Activated CD4-positive, alpha-beta memory T cell treated with anti-CD3 and anti-CD28 coated beads for 36 hours (primary cell): ENCODE measurements at regions of chr10 and their contacts with region 1.

Region 1: GRCh38 chr10:3776796-3777571 is 8.0 kb downstream of the KLF6 start:
- DNase-seq: peak; percentile 70
- H3K4me3 Mint-ChIP-seq: peak overlapping the region; percentile 67
- H3K27ac Mint-ChIP-seq: peak overlapping the region; percentile 83
- H3K4me1 Mint-ChIP-seq: peaks cover 77% of the 10 kb centered on the region
- H3K27me3 Mint-ChIP-seq: no peaks in the 10 kb centered on the region

Region 2: GRCh38 chr10:3605882-3606281 is 171.1 kb before region 1 on chr10:
- CTCF ChIA-PET with region 1: no interaction called
- POLR2A ChIA-PET with region 1: no interaction called
- intact Hi-C with region 1: loop called (anchors 5 kb)
- DNase-seq: peak; percentile 20
- H3K4me3 Mint-ChIP-seq: no peak overlapping the region
- H3K27ac Mint-ChIP-seq: peak overlapping the region; percentile 55
- H3K4me1 Mint-ChIP-seq: peaks cover 18% of the 10 kb centered on the region
- H3K27me3 Mint-ChIP-seq: no peaks in the 10 kb centered on the region

Region 3: GRCh38 chr10:3668276-3668965 is 108.6 kb before region 1 on chr10:
- CTCF ChIA-PET with region 1: no interaction called
- POLR2A ChIA-PET with region 1: no interaction called
- intact Hi-C with region 1: loop called (anchors 5 kb)
- DNase-seq: peak; percentile 76
- H3K4me3 Mint-ChIP-seq: peak overlapping the region; percentile 72
- H3K27ac Mint-ChIP-seq: peak overlapping the region; percentile 79
- H3K4me1 Mint-ChIP-seq: peaks cover 38% of the 10 kb centered on the region
- H3K27me3 Mint-ChIP-seq: no peaks in the 10 kb centered on the region

Region 4: DNA sequence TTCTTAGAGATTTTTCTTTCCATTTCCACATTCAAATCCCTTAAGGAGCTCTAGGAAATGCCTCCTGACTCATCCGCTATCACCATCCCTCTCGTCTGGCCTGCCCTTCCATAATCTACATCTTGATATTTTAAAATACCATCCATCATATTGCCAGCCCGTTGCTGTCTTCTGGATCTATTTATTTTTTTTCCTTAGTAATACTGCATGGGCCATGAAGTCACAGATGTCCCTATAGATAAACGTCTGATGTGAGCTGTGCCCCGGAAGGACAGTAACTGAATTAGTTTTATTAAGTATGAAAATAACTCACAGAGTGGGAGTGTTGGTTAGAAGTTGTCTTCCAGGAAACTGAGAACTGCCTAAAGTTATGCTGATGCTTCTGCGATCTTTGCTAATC is 68.1 kb before region 1 on chr10:
- CTCF ChIA-PET with region 1: no interaction called
- POLR2A ChIA-PET with region 1: no interaction called
- intact Hi-C with region 1: no loop called
- DNase-seq: peak; percentile 20
- H3K4me3 Mint-ChIP-seq: no peak overlapping the region
- H3K27ac Mint-ChIP-seq: peak overlapping the region; percentile 38
- H3K4me1 Mint-ChIP-seq: peaks cover 20% of the 10 kb centered on the region
- H3K27me3 Mint-ChIP-seq: peaks cover 2% of the 10 kb centered on the region

Region 5: GRCh38 chr10:3765146-3765545 is 11.8 kb before region 1 on chr10:
- CTCF ChIA-PET with region 1: interaction called, 4 read pairs
- POLR2A ChIA-PET with region 1: interaction called, 63 read pairs
- intact Hi-C with region 1: loop called (anchors 1 kb)
- DNase-seq: peak; percentile 68
- H3K4me3 Mint-ChIP-seq: peak overlapping the region; percentile 22
- H3K27ac Mint-ChIP-seq: peak overlapping the region; percentile 70
- H3K4me1 Mint-ChIP-seq: peaks cover 87% of the 10 kb centered on the region
- H3K27me3 Mint-ChIP-seq: no peaks in the 10 kb centered on the region

Region 6: DNA sequence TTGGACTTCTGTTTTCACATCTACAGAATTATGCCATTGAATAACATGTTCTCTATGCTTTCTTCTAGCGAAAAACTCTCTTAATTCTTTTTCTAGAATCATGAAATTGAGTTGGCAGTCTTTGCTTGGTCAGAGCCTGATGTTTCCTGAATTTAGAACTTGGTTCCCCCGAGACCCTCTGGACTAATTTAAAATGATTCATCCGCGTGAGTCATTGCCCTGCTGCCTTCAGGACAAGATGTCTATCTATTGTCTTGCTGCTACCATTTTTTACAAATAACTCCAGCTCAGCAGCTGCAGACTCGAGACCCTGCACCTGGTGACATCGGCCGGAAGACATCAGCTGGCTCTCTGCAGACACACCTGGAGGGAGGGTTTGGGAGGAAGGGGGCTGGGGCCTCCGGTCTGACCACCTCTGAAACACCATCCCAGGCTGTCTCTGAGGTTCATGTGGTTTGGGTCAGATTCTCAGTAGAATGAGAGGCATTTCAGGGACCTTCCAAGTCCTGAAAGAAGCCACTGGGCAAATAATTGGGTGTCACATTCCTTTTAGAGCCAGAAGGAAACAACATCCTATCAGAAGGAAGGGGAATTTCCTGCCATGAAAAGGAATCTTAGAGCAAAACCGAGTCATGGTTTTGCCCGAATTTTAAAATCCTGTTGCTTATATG is 28.9 kb after region 1 on chr10:
- CTCF ChIA-PET with region 1: interaction called, 5 read pairs
- POLR2A ChIA-PET with region 1: interaction called, 405 read pairs
- intact Hi-C with region 1: no loop called
- DNase-seq: peak; percentile 72
- H3K4me3 Mint-ChIP-seq: peak overlapping the region; percentile 68
- H3K27ac Mint-ChIP-seq: no peak overlapping the region
- H3K4me1 Mint-ChIP-seq: peaks cover 62% of the 10 kb centered on the region
- H3K27me3 Mint-ChIP-seq: no peaks in the 10 kb centered on the region